Heart right ventricle (tissue), 16 donors: ENCODE measurements at regions of chr10 and their contacts with region 1.

Region 1: GRCh38 chr10:68121852-68122251 is 12.6 kb downstream of the MYPN start:
- DNase-seq: no peak
- ATAC-seq: peak in 2 of 8 donors; percentile 12 to 50
- H3K4me3 ChIP-seq: peak overlapping the region in 4 of 10 donors; percentile 16 to 26 (median 18)
- H3K27ac ChIP-seq: peak overlapping the region in 3 of 10 donors; percentile 6 to 17 (median 10)
- H3K4me1 ChIP-seq: peaks cover 0 to 69% (median 19%) of the 10 kb centered on the region in 9 donors
- H3K27me3 ChIP-seq: no peaks in the 10 kb centered on the region
- CTCF ChIP-seq: no peak

Region 2: GRCh38 chr10:67893637-67894036 is 228.2 kb before region 1 on chr10:
- intact Hi-C with region 1: no loop called
- DNase-seq: no peak
- ATAC-seq: no peak
- H3K4me3 ChIP-seq: no peak overlapping the region
- H3K27ac ChIP-seq: no peak overlapping the region
- H3K4me1 ChIP-seq: peaks cover 0 to 8% (median 0%) of the 10 kb centered on the region in 9 donors
- H3K27me3 ChIP-seq: no peaks in the 10 kb centered on the region
- CTCF ChIP-seq: no peak

Region 3: GRCh38 chr10:68088744-68089143 is 33.1 kb before region 1 on chr10:
- intact Hi-C with region 1: loop called in 1 of 10 experiments (anchors 2 kb)
- DNase-seq: no peak
- ATAC-seq: peak in 2 of 8 donors; percentile 6 to 12
- H3K4me3 ChIP-seq: peak overlapping the region in 6 of 10 donors; percentile 5 to 56 (median 50)
- H3K27ac ChIP-seq: peak overlapping the region in 7 of 10 donors; percentile 5 to 89 (median 79)
- H3K4me1 ChIP-seq: peaks cover 0 to 17% (median 4%) of the 10 kb centered on the region in 9 donors
- H3K27me3 ChIP-seq: no peaks in the 10 kb centered on the region
- CTCF ChIP-seq: no peak

Region 4: DNA sequence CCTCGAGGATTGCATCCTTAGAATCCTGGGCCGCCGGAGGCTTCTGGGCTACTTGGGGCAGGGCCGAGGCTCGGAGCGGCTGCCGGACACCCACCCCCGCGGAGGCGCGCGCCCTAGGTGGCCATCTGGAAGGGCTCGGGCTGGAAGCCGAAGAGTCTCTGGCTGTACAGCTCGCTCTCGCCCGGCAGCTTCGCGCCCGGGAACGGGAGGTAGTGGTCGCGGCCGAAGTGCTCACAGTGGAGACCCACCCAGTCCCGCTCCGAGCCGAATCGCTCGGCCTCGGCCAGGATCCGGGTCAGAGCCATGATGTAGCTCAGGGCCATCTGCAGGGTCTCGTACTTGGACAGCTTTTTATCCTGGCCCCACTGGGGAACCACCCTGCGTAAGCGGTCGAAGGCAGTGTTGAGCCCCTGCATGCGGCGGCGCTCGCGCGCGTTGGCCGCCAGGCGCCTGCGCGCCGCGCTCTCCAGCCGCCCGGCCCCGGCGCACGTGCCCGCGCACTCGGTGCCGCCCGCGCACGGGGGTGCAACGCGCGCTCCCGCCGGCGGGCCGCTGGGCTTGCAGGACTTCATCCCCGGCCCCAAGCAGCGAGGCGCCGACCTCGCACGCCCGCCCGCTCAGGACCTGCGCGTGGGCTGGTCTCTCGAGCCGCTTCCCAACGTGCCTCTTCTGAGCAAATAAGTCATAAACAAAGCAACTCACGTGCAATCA is 109.4 kb after region 1 on chr10:
- intact Hi-C with region 1: no loop called
- DNase-seq: peak; percentile 43 to 60
- ATAC-seq: peak; percentile 94 to 98 (median 96)
- H3K4me3 ChIP-seq: peak overlapping the region; percentile 39 to 91 (median 62)
- H3K27ac ChIP-seq: peak overlapping the region in 8 of 10 donors; percentile 45 to 73 (median 64)
- H3K4me1 ChIP-seq: peaks cover 0 to 13% (median 7%) of the 10 kb centered on the region in 9 donors
- H3K27me3 ChIP-seq: peaks cover 0 to 37% (median 2%) of the 10 kb centered on the region in 7 donors
- CTCF ChIP-seq: peak in 2 of 9 donors; percentile 33 to 42

Region 5: DNA sequence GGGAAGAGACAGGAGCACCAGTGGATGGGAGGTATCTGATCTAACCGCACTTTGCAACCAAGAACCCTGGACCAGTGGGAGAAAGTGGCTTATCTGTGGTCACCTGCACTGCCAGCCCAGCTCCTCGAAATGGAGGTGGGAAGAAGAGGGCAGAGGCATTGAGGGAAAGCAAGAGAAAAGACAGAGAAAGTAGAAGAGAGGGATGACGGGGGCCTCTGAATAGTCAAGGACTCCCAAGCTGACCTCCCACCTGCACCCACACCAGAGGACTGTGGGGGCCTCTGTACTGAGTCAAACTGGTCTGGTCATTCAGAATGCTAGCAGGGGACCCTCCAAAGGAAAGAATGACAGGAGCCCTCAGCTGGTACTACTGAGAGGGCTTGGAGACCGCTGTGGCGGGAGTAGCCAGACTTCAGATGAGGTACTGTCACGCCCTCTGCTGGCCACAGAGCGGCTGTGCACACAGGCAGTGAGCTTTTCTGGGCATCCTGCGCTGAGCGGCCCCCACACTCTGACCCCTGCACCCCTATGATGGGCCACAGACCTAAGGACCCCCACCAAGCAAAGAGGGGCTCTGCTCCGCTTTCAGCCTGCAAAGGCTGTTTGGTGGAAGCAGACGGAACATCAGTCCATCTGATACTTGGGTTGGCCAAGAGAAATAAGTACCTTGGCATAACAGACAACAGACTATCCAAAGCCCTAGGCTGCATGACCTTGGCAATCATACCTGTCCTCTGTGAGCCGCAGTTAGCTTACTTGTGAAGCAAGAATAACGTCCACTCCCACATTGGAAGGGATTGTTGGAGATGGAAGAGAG is 1792.8 kb after region 1 on chr10:
- intact Hi-C with region 1: no loop called
- DNase-seq: peak; percentile 70 to 71
- ATAC-seq: peak; percentile 50 to 80 (median 76)
- H3K4me3 ChIP-seq: no peak overlapping the region
- H3K27ac ChIP-seq: no peak overlapping the region
- H3K4me1 ChIP-seq: peaks cover 0 to 33% (median 19%) of the 10 kb centered on the region in 9 donors
- H3K27me3 ChIP-seq: peaks cover 0 to 6% (median 0%) of the 10 kb centered on the region in 7 donors
- CTCF ChIP-seq: peak; percentile 80 to 95 (median 94)